H1 (cell line): ENCODE measurements at regions of chr3 and their contacts with region 1.

Region 1: GRCh38 chr3:136792556-136793330 is 26.2 kb upstream of the SLC35G2 start:
- DNase-seq: no peak
- H3K4me3 ChIP-seq: no peak overlapping the region
- H3K27ac ChIP-seq: no peak overlapping the region
- H3K4me1 ChIP-seq: no peaks in the 10 kb centered on the region
- H3K27me3 ChIP-seq: no peaks in the 10 kb centered on the region
- CTCF ChIP-seq: no peak
- EP300 ChIP-seq: no peak
- POLR2A ChIP-seq: no peak
- RAD21 ChIP-seq: no peak

Region 2: GRCh38 chr3:136621628-136622027 is 171.1 kb before region 1 on chr3:
- CTCF ChIA-PET with region 1: no interaction called
- POLR2A ChIA-PET with region 1: no interaction called
- DNase-seq: no peak
- H3K4me3 ChIP-seq: no peak overlapping the region
- H3K27ac ChIP-seq: no peak overlapping the region
- H3K4me1 ChIP-seq: peaks cover 0 to 4% (median 1%) of the 10 kb centered on the region in 4 experiments; a peak in 1 of 7 replicates
- H3K27me3 ChIP-seq: no peaks in the 10 kb centered on the region
- CTCF ChIP-seq: no peak
- EP300 ChIP-seq: no peak
- POLR2A ChIP-seq: no peak
- RAD21 ChIP-seq: no peak

Region 3: GRCh38 chr3:136804813-136805212 is 12.1 kb after region 1 on chr3:
- CTCF ChIA-PET with region 1: interaction called, 11 read pairs
- POLR2A ChIA-PET with region 1: no interaction called
- DNase-seq: no peak
- H3K4me3 ChIP-seq: no peak overlapping the region
- H3K27ac ChIP-seq: no peak overlapping the region
- H3K4me1 ChIP-seq: peaks cover 0 to 3% (median 0%) of the 10 kb centered on the region in 4 experiments; a peak in 1 of 7 replicates
- H3K27me3 ChIP-seq: no peaks in the 10 kb centered on the region
- CTCF ChIP-seq: no peak
- EP300 ChIP-seq: no peak
- POLR2A ChIP-seq: no peak
- RAD21 ChIP-seq: no peak